Body of pancreas (tissue), 4 donors: ENCODE measurements at regions of chr11 and their contacts with region 1.

Region 1: DNA sequence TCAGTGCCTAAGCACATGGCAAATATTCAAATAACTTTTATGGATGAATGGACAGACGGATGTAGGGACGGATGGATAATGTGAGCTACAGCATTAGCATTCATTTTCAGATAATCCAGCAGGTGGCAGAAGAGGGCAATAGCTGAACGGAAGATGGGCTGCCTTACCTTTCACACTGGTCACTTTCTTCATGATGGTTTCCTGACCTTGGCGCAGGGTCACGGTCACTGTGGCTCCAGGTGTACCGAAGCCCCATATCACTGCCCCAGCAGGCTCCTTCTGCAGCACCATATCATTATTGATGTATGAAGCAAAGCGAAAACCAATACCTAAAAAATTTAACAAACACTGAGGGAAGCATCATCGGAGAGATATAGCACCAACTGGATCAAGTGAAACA is 4.3 kb downstream of the SIAE start:
- DNase-seq: peak; percentile 32 to 55 (median 40)
- ATAC-seq: no peak
- H3K4me3 ChIP-seq: no peak overlapping the region
- H3K27ac ChIP-seq: no peak overlapping the region
- H3K4me1 ChIP-seq: peaks cover 10% of the 10 kb centered on the region
- H3K27me3 ChIP-seq: no peaks in the 10 kb centered on the region
- CTCF ChIP-seq: peak; percentile 52 to 88 (median 82)
- POLR2A ChIP-seq: no peak

Region 2: GRCh38 chr11:124763156-124763947 is 94.2 kb after region 1 on chr11:
- intact Hi-C with region 1: loop called (anchors 10 kb)
- DNase-seq: peak; percentile 88 to 93 (median 90)
- ATAC-seq: peak; percentile 56
- H3K4me3 ChIP-seq: peak overlapping the region in 1 of 2 donors; percentile 21
- H3K27ac ChIP-seq: peak overlapping the region; percentile 55 to 81 (median 60)
- H3K4me1 ChIP-seq: peaks cover 57% of the 10 kb centered on the region
- H3K27me3 ChIP-seq: peaks cover 0 to 23% of the 10 kb centered on the region in 2 donors
- CTCF ChIP-seq: peak; percentile 55 to 93 (median 73)
- POLR2A ChIP-seq: no peak

Region 3: GRCh38 chr11:124842305-124842704 is 173.1 kb after region 1 on chr11:
- intact Hi-C with region 1: loop called (anchors 10 kb)
- DNase-seq: no peak
- ATAC-seq: no peak
- H3K4me3 ChIP-seq: no peak overlapping the region
- H3K27ac ChIP-seq: no peak overlapping the region
- H3K4me1 ChIP-seq: peaks cover 22% of the 10 kb centered on the region
- H3K27me3 ChIP-seq: peaks cover 6 to 67% of the 10 kb centered on the region in 2 donors
- CTCF ChIP-seq: no peak
- POLR2A ChIP-seq: no peak